Heart right ventricle (tissue), 16 donors: ENCODE measurements at regions of chr6 and their contacts with region 1.

Region 1: GRCh38 chr6:156776840-156777576 is at the start of gene ARID1B:
- DNase-seq: peak; percentile 84 to 87
- ATAC-seq: peak; percentile 69 to 83 (median 80)
- H3K4me3 ChIP-seq: peak within 1 kb of the TSS; percentile 67 to 87 (median 78)
- H3K27ac ChIP-seq: peak within 1 kb of the TSS; percentile 96 to 99 (median 98)
- H3K4me1 ChIP-seq: peaks cover 0 to 43% (median 36%) of the 10 kb centered on the region in 9 donors
- H3K27me3 ChIP-seq: no peaks in the 10 kb centered on the region
- CTCF ChIP-seq: no peak
- total RNA-seq, gene ARID1B: 39.0 to 63.2 (median 53.0) TPM

Region 2: DNA sequence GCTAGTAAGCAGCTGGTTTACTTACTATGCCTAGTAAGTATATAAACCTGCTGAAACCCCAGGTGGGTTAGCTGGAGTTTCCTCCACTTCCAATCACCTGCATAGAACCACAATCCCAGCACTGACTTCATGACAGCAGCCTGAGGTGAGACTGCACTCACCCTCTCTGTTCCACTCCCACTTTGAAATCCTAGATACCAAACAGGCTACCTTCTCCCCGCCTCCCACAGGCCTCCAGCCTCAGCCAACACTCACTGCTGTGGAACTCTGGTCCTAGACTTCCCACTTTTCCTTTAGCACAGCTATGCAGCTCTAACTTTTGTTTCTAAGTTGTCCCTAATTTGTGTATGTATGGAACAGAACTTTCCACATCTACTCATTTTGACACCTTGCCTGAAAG is 149.5 kb before region 1 on chr6:
- intact Hi-C with region 1: no loop called
- DNase-seq: no peak
- ATAC-seq: no peak
- H3K4me3 ChIP-seq: no peak overlapping the region
- H3K27ac ChIP-seq: no peak overlapping the region
- H3K4me1 ChIP-seq: no peaks in the 10 kb centered on the region
- H3K27me3 ChIP-seq: no peaks in the 10 kb centered on the region
- CTCF ChIP-seq: no peak

Region 3: DNA sequence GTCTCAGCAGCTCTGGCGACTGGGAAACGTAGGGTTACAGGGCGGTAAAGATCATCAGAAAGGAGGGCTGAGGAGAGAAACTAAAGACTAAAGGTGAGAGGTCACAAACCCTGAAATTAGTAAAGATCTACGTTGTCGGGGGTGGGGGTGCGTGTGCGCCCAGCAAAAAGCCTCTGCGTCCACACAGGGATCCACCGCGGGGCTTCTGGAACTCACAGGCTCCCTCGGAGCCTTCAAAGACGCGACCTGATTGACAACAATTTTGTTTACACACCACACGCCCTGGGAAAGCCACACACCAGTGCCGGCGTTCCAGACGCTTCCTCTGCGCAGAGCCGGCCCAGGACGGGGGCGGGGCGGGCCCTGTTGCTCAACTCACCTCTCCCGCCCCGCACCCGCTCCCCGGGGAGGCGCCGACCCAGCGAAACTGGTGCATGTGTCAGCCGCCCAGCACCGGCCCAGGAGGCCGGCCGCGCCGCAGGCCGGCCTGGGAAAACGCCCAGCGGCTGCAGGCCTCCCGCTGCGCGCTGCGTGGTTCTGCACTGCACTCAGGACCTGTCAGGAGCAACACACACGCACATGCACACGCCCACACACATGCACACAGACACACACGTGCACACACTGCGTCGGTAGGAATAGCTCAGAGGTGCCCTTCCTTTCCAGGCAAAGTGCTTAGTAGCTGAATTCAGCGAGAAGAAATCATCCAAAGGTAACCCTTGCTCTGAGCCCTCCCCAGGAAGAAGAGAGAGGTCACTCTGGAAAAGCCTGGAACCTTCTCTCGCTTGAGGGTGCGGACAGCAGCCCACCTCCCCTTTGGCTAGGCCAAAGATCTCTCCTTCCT is 57.1 kb before region 1 on chr6:
- intact Hi-C with region 1: loop called in 5 of 10 experiments (anchors 1 to 10 kb)
- DNase-seq: peak; percentile 93 to 97
- ATAC-seq: peak; percentile 98 to 100 (median 98)
- H3K4me3 ChIP-seq: peak overlapping the region in 9 of 10 donors; percentile 21 to 61 (median 46)
- H3K27ac ChIP-seq: peak overlapping the region; percentile 80 to 96 (median 88)
- H3K4me1 ChIP-seq: peaks cover 11 to 30% (median 26%) of the 10 kb centered on the region in 9 donors
- H3K27me3 ChIP-seq: no peaks in the 10 kb centered on the region
- CTCF ChIP-seq: no peak

Region 4: DNA sequence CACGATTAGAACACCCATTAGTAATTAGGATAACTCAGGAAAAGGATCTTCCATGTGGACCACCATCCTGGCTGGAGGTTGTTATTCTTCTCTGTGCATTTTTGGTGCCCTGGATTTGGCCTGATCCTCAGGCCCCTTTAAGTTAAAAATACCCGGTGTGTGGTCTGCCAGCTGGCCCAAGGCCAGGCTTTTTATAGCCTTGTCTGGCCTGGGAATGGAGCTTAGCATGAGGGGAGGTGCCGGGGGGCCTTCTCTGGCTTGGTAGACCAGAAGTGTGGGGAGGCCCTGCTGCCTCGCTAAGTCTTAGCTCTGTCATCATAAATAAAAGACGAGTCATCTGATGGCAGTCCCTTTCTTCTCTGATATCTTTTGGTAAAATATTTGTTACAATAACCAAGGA is 71.5 kb after region 1 on chr6:
- intact Hi-C with region 1: loop called in 4 of 10 experiments (anchors 5 kb)
- DNase-seq: peak; percentile 81 to 89
- ATAC-seq: peak; percentile 82 to 91 (median 85)
- H3K4me3 ChIP-seq: peak overlapping the region in 5 of 10 donors; percentile 5 to 20 (median 9)
- H3K27ac ChIP-seq: peak overlapping the region in 9 of 10 donors; percentile 2 to 78 (median 66)
- H3K4me1 ChIP-seq: peaks cover 35 to 100% (median 99%) of the 10 kb centered on the region in 9 donors
- H3K27me3 ChIP-seq: no peaks in the 10 kb centered on the region
- CTCF ChIP-seq: no peak

Region 5: GRCh38 chr6:156859686-156860085 is 82.7 kb after region 1 on chr6:
- intact Hi-C with region 1: no loop called
- DNase-seq: no peak
- ATAC-seq: no peak
- H3K4me3 ChIP-seq: no peak overlapping the region
- H3K27ac ChIP-seq: no peak overlapping the region
- H3K4me1 ChIP-seq: peaks cover 0 to 74% (median 41%) of the 10 kb centered on the region in 9 donors
- H3K27me3 ChIP-seq: no peaks in the 10 kb centered on the region
- CTCF ChIP-seq: no peak

Region 6: GRCh38 chr6:156933201-156934068 is 156.4 kb after region 1 on chr6:
- intact Hi-C with region 1: loop called in 2 of 10 experiments (anchors 5 kb)
- DNase-seq: no peak
- ATAC-seq: peak; percentile 44 to 82 (median 71)
- H3K4me3 ChIP-seq: no peak overlapping the region
- H3K27ac ChIP-seq: peak overlapping the region; percentile 2 to 61 (median 40)
- H3K4me1 ChIP-seq: peaks cover 0 to 66% (median 41%) of the 10 kb centered on the region in 9 donors
- H3K27me3 ChIP-seq: no peaks in the 10 kb centered on the region
- CTCF ChIP-seq: peak in 4 of 9 donors; percentile 15 to 43 (median 32)

Region 7: GRCh38 chr6:157021344-157021992 is 244.5 kb after region 1 on chr6:
- intact Hi-C with region 1: loop called in 7 of 10 experiments (anchors 2 to 5 kb)
- DNase-seq: peak; percentile 91 to 92
- ATAC-seq: peak; percentile 93 to 96 (median 94)
- H3K4me3 ChIP-seq: peak overlapping the region; percentile 59 to 88 (median 78)
- H3K27ac ChIP-seq: peak overlapping the region; percentile 94 to 100 (median 98)
- H3K4me1 ChIP-seq: peaks cover 0 to 63% (median 47%) of the 10 kb centered on the region in 9 donors
- H3K27me3 ChIP-seq: no peaks in the 10 kb centered on the region
- CTCF ChIP-seq: peak in 8 of 9 donors; percentile 29 to 71 (median 48)